PC-9 (cell line): ENCODE measurements at regions of chr9 and their contacts with region 1.

Region 1: DNA sequence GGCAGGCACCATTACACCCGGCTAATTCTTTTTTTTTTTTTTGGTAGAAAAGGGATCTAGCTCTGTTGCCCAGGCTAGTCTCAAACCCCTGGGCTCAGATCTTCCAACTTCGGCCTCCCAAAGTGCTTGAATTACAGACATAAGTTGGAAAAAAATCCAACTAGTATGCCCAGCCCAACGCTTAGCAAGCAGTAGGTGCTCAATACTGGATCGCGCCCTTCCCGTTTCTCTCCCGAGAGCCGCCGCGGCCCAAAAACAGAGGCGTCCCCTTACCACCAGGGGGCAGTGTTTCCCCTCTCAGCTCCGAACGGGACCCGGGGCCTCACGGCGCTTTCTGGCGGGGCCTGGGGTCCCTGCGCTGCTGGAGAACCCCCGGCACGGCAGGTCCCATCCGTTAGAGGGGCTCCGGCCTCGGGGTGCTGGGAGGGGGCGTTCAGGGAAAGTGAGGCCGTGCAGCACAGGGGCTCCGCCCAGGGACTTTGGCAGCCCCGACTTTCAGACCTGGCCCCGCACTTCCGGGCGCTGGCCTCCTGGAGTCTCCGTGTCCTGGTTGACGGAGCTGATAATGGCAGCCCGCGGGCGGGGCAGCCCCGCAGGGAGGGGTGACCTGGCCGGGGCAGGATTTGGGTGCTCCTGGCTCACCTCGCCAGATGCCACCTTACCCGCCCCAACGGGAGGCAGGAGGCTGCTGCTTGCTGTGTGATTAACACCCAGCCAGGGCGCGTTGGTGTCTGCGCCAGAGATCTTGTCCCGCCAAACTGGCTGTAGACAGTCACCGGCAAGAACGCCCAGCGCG is 15.2 kb downstream of the PTGES start:
- DNase-seq: peak; percentile 44 to 87
- H3K4me3 ChIP-seq: 0 out of 2 replicates have a peak overlapping the region, but pooled peaks have one; percentile 12
- H3K27ac ChIP-seq: 0 out of 2 replicates have a peak overlapping the region, but pooled peaks have one; percentile 13
- H3K4me1 ChIP-seq: 0 out of 2 replicates have a peak, but pooled peaks cover 5% of the 10 kb centered on the region
- H3K27me3 ChIP-seq: no peaks in the 10 kb centered on the region
- CTCF ChIP-seq: peak; percentile 95

Region 2: DNA sequence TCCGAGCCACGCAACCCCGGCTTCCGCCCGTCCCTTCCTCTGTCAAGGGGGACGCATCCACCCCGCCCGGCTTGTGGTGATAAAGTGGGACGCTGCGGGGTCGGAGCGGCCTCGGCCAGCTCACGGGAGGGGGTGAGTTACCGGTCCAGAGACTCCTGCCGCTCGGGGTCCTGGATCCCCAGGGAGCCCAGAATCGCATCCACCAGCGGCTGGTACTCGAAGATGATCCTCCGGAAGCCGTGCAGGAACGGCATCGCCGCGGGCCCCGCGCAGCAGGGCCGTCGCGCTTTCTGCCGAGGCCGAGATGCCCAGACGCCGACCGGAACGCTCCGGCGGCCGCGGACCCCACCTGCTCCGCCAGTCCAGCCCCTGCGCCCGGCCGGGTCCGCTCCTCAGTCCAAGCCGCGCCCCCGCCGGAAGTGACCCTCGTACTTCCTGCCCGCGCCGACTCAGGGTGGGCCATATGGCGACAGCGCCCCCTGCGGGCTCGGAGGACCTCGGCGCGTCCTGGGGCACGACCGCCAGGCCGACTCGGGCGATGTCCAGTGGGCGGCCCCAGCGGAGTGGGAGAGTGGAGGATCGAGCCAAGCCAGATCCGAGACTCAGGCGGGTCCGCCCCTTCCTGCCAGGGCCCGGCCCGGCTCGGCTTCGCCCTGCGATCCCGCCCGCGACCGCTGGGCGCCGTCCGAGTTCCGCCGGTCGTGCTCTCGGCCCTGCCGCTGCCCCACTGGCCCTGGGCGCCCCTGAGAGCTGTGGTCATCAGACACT is 95.7 kb before region 1 on chr9 and contains the start of gene ASB6:
- CTCF ChIA-PET with region 1: interaction called, 3 read pairs
- POLR2A ChIA-PET with region 1: interaction called, 3 read pairs
- intact Hi-C with region 1: loop called (anchors 1 kb)
- DNase-seq: peak; percentile 81 to 100
- H3K4me3 ChIP-seq: peak within 1 kb of the TSS; percentile 96
- H3K27ac ChIP-seq: no peak within 1 kb of the TSS
- H3K4me1 ChIP-seq: peaks cover 8% of the 10 kb centered on the region
- H3K27me3 ChIP-seq: no peaks in the 10 kb centered on the region
- CTCF ChIP-seq: peak; percentile 96
- total RNA-seq, gene ASB6: 19.3 and 20.2 TPM in 2 replicates

Region 3: GRCh38 chr9:129752915-129753729 is 15.4 kb after region 1 on chr9 and contains the start of gene PTGES:
- CTCF ChIA-PET with region 1: interaction called, 12 read pairs
- POLR2A ChIA-PET with region 1: interaction called, 11 read pairs
- intact Hi-C with region 1: loop called (anchors 1 kb)
- DNase-seq: peak; percentile 84 to 94
- H3K4me3 ChIP-seq: peak within 1 kb of the TSS; percentile 85
- H3K27ac ChIP-seq: peak within 1 kb of the TSS; percentile 94
- H3K4me1 ChIP-seq: peaks cover 61% of the 10 kb centered on the region
- H3K27me3 ChIP-seq: no peaks in the 10 kb centered on the region
- CTCF ChIP-seq: no peak
- total RNA-seq, gene PTGES: 116 and 119 TPM in 2 replicates

Region 4: GRCh38 chr9:129761901-129762364 is 24.3 kb after region 1 on chr9:
- CTCF ChIA-PET with region 1: interaction called, 4 read pairs
- POLR2A ChIA-PET with region 1: interaction called, 8 read pairs
- intact Hi-C with region 1: loop called (anchors 1 kb)
- DNase-seq: peak; percentile 80 to 96
- H3K4me3 ChIP-seq: peak overlapping the region; percentile 23; the same call in 1 of the 2 replicates
- H3K27ac ChIP-seq: peak overlapping the region; percentile 97
- H3K4me1 ChIP-seq: peaks cover 60% of the 10 kb centered on the region
- H3K27me3 ChIP-seq: no peaks in the 10 kb centered on the region
- CTCF ChIP-seq: no peak

Region 5: GRCh38 chr9:129776938-129777768 is 39.5 kb after region 1 on chr9:
- CTCF ChIA-PET with region 1: interaction called, 24 read pairs
- POLR2A ChIA-PET with region 1: interaction called, 4 read pairs
- intact Hi-C with region 1: loop called (anchors 1 kb)
- DNase-seq: peak; percentile 96 to 98
- H3K4me3 ChIP-seq: peak overlapping the region; percentile 23; the same call in 1 of the 2 replicates
- H3K27ac ChIP-seq: peak overlapping the region; percentile 71
- H3K4me1 ChIP-seq: peaks cover 84% of the 10 kb centered on the region
- H3K27me3 ChIP-seq: no peaks in the 10 kb centered on the region
- CTCF ChIP-seq: no peak

Region 6: DNA sequence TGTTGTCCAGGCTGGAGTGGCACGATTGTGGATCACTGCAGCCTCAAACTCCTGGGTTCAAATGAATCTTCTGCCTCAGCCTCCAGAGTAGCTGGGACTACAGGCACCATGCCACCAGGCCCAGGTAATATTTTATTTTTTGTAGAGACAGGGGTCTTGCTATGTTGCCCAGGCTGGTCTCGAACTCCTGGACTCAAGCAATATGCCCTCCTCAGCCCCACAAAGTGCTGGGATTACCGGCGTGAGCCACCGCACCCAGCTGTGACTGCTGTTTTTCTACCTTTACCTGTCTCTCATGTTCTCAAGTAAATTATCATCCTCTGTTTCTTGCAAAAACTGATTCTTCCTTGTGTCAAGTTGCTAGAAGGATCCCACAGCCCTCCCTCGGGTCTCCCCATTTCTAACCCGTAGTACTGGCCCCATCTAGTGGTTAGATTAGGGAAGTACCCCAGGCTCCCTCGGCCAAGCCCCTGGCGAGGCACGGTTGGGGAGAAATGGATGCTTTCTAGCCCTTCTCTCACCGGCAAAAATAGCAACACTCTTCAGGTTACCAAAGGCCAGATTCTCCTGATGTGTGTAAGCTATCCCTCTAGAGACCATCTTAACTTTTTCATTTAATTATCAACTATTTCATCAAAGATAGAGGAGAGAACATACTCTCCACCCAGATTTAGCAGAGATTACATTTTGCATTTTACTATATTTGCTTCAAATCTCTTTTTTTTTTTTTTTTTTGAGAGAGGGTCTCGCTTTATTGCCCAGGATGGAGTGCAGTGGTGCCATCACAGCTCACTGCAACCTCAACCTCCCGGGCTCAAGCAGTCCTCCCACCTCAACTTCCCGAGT is 46.1 kb after region 1 on chr9:
- CTCF ChIA-PET with region 1: interaction called, 24 read pairs
- POLR2A ChIA-PET with region 1: no interaction called
- intact Hi-C with region 1: loop called (anchors 1 kb)
- DNase-seq: peak; percentile 54 to 68
- H3K4me3 ChIP-seq: no peak overlapping the region
- H3K27ac ChIP-seq: no peak overlapping the region
- H3K4me1 ChIP-seq: peaks cover 31% of the 10 kb centered on the region
- H3K27me3 ChIP-seq: peaks cover 6% of the 10 kb centered on the region; the same call in 1 of the 2 replicates
- CTCF ChIP-seq: peak; percentile 94

Region 7: DNA sequence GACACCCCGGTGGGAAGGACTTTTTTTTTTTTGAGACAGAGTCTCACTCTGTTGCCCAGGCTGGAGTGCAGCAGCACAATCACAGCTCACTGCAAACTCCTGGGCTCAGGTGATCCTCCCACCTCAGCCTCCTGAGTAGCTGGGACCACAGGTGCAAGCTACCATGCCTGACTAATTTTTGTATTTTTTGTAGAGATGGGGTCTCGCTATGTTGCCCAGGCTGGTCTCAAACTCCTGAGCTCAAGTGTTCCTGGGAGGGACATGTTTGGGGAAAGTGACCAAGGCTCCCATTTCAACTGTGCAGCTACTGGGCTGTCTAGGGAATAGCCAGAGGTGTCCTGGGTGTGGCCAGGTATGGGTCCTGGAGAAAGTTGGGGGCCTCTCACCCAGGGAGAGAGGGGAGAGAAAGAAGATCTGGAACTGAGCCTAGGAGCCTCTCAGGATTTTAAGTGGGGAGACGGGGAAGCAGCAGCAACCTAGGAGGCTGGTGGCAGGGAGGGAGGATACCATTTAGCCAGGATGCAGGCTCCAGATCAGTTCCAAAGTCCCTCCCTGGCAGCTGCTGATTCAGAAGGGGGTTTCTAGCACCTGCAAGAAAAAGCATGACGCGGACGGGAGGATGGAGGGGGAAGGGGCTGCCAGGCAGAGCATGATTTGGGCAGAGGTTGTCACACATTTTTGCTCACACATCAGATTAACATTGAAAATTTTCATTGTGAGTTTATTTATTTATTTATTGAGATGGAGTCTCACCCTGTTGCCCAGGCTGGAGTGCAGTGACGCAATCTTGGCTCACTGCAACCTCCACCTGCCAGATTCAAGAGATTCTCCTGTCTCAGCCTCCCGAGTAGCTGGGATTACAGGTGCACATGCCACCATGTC is 58.6 kb after region 1 on chr9:
- CTCF ChIA-PET with region 1: no interaction called
- POLR2A ChIA-PET with region 1: no interaction called
- intact Hi-C with region 1: loop called (anchors 2 kb)
- DNase-seq: no peak
- H3K4me3 ChIP-seq: no peak overlapping the region
- H3K27ac ChIP-seq: no peak overlapping the region
- H3K4me1 ChIP-seq: no peaks in the 10 kb centered on the region
- H3K27me3 ChIP-seq: 0 out of 2 replicates have a peak, but pooled peaks cover 20% of the 10 kb centered on the region
- CTCF ChIP-seq: no peak